ENCODE measurements at regions of chr16 and their contacts with region 1.

Region 1: GRCh38 chr16:21708533-21709115 is 44.9 kb downstream of the OTOA start:
- DNase-seq: peak; percentile 86
- H3K4me3 Mint-ChIP-seq: no peak overlapping the region
- H3K27ac Mint-ChIP-seq: no peak overlapping the region
- H3K4me1 Mint-ChIP-seq: peaks cover 10% of the 10 kb centered on the region
- H3K27me3 Mint-ChIP-seq: no peaks in the 10 kb centered on the region

Region 2: GRCh38 chr16:21584817-21585216 is 123.8 kb before region 1 on chr16:
- CTCF ChIA-PET with region 1: interaction called, 30 read pairs
- POLR2A ChIA-PET with region 1: no interaction called
- DNase-seq: no peak
- H3K4me3 Mint-ChIP-seq: no peak overlapping the region
- H3K27ac Mint-ChIP-seq: no peak overlapping the region
- H3K4me1 Mint-ChIP-seq: peaks cover 2% of the 10 kb centered on the region
- H3K27me3 Mint-ChIP-seq: no peaks in the 10 kb centered on the region

Region 3: DNA sequence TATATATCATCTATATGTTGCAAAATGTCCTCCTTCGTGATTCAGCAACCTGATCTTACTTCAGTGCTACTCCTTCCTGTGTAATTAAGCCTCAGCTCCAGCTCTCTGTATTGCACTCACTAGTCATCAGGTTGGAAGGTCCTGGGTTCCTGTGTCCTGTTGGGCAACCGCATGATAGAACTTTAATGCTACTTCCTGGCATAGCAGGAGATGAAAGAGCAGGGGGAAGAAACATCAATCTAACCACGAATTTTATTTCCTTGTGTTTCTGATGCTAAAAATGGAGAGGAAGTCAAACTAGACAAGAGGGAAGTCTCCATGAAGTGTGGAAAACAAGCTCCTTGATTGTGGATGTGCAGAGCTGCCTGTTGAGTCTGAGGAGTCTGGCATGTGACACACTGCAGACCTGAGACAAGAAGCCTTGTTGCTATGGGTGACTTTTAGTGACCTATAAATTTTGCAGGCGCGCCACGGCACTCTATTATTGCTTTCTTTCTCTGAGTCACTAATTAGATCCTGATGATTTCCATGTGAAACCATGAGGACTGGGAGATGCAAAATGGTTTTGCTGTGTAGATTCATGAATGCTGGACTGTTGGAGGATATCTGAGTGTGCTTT is 81.9 kb before region 1 on chr16:
- CTCF ChIA-PET with region 1: no interaction called
- POLR2A ChIA-PET with region 1: no interaction called
- DNase-seq: peak; percentile 43
- H3K4me3 Mint-ChIP-seq: no peak overlapping the region
- H3K27ac Mint-ChIP-seq: peak overlapping the region; percentile 69
- H3K4me1 Mint-ChIP-seq: peaks cover 49% of the 10 kb centered on the region
- H3K27me3 Mint-ChIP-seq: no peaks in the 10 kb centered on the region

Region 4: DNA sequence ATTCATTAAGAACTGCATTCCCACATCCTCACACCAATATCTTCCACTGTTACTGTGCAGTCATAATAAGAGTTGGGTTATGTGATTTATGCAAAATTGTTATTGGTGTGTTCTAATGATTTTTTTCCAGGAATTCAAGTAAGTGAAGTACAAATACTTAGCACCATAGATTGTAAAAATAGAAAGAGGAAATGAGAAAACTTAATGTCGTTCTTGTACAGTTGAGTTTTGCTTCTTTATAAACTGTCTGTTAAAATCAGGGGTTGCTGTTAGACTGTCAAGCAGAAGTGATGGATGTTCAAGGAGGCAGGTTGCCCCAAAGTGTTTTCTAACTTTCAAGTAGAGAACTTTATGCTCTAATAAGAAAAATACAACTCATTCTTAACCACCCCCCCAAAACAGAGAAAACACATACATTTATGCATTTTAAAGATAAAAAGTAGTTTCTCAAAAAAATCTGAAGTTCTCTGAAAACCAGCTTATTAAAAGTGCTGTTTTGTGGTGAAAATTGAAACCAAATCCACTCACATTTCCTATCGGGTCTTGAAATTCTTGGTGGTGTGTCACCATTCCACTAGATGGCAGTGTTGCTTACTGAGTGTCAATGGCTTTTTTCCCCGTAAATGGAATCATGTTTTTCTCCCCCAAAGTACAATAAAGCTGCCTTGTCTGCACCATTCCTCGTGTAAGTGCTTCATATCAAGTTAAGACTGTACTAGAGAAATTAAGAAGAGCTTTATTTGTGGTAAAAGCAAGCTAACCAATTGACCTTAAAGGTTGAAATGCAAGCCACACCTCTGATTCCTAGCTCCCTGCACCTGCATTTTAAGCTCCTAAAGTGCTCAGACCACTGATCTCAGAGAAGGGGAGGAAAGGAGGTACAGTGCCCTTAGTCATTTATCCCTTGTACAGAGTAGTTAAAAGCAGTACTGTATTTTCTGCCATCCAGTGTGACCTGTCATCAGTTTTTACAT is 51.5 kb before region 1 on chr16:
- CTCF ChIA-PET with region 1: interaction called, 80 read pairs
- POLR2A ChIA-PET with region 1: no interaction called
- DNase-seq: peak; percentile 34
- H3K4me3 Mint-ChIP-seq: no peak overlapping the region
- H3K27ac Mint-ChIP-seq: no peak overlapping the region
- H3K4me1 Mint-ChIP-seq: peaks cover 45% of the 10 kb centered on the region
- H3K27me3 Mint-ChIP-seq: no peaks in the 10 kb centered on the region

Region 5: GRCh38 chr16:21727344-21727743 is 18.7 kb after region 1 on chr16:
- CTCF ChIA-PET with region 1: no interaction called
- POLR2A ChIA-PET with region 1: no interaction called
- DNase-seq: no peak
- H3K4me3 Mint-ChIP-seq: no peak overlapping the region
- H3K27ac Mint-ChIP-seq: no peak overlapping the region
- H3K4me1 Mint-ChIP-seq: peaks cover 3% of the 10 kb centered on the region
- H3K27me3 Mint-ChIP-seq: peaks cover 6% of the 10 kb centered on the region

Region 6: GRCh38 chr16:21980032-21980431 is 271.4 kb after region 1 on chr16:
- CTCF ChIA-PET with region 1: no interaction called
- POLR2A ChIA-PET with region 1: no interaction called
- DNase-seq: no peak
- H3K4me3 Mint-ChIP-seq: no peak overlapping the region
- H3K27ac Mint-ChIP-seq: no peak overlapping the region
- H3K4me1 Mint-ChIP-seq: no peaks in the 10 kb centered on the region
- H3K27me3 Mint-ChIP-seq: no peaks in the 10 kb centered on the region

Region 7: DNA sequence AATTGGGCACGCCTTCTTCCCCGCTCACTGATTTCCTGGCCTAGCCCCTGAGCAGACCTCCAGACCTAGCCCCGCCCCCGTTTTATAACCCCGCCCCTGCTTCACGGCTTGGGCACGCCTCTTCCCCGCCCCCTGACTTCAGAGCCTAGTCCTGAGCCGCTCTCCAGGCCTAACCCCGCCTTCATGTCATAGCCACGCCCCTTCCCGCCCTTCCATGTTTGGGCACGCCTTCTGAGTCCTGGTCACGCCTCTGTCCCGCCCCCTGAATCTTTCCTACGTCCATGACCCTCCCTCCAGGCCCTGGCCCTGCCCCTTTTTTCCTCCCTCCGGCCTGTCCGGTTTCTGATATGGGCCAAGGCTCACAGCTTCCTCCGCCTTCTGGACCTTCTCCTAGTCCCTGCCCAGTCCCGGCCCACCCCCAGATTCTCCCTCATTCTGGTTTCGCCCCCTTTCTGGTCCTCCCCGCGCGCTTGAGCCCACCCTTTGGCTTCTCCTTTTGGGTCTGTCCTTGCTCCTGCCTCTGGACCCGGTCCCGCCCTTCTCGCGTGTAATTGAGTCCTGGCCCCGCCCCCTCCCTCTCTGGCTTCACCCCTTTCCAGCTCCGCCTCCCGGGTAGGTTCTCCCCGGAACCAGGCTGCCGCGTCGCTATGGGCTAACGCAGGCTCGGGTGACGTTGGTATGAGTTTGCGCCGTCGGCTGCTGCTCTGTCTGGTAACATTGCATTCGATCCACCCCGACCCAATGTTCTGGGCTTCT is 482.3 kb after region 1 on chr16:
- CTCF ChIA-PET with region 1: no interaction called
- POLR2A ChIA-PET with region 1: no interaction called
- DNase-seq: peak; percentile 99
- H3K4me3 Mint-ChIP-seq: peak overlapping the region; percentile 87
- H3K27ac Mint-ChIP-seq: peak overlapping the region; percentile 99
- H3K4me1 Mint-ChIP-seq: peaks cover 55% of the 10 kb centered on the region
- H3K27me3 Mint-ChIP-seq: peaks cover 1% of the 10 kb centered on the region